Dorsolateral prefrontal cortex (tissue), 120 donors: ENCODE measurements at regions of chr7 and their contacts with region 1.

Region 1: GRCh38 chr7:101542527-101543241 is 86.4 kb downstream of the MYL10 start:
- DNase-seq: peak in 9 of 10 donors; percentile 55 to 81 (median 70)
- H3K4me3 ChIP-seq: no peak overlapping the region
- H3K27ac ChIP-seq: no peak overlapping the region
- H3K27me3 ChIP-seq: no peaks in the 10 kb centered on the region
- CTCF ChIP-seq: peak; percentile 73 to 95 (median 87)

Region 2: DNA sequence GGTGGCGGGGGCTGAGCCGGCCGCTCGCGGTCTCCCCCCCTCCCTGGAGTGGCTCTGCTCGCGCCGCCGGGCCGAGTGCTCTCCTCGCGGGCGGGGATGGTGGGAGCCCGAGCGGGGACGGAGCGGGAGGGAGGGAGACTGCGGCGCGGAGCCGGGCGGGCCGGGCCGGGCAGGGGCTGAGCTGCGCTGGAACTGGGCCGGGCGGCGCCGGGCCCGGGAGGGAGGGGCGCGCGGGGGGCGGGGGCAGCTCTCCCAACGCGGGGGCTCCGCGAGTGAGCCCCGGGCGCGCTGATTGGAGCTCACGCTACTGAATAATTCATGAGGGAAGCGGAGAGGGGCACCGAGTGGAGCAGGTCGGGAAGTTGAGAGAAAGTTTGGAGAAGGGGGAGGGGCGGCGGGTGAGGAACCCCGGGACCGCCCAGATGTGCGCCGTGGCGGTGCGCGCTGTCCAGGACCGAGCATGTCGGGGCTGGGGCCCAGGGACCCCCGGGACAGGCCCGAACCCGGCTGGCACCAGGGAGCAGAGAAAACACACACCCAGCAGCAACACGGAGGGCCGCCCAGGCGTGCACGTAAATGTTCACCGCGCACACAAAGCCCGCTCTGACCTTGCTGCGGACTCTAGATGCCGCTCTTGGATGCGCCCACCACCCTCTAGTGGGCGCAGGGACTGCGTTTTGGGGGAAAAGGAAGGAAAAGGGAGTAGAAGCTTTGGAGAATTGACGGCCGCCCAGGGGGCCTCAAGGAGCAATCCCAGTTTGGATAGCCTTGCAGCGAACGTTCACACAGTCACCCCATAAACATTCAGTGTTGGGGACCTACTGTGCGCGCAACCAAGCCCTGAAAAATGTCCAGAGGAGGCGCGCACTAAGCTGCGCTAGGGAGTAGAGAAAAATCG is 715.1 kb before region 1 on chr7 and contains the start of gene EPHB4:
- intact Hi-C with region 1: no loop called
- DNase-seq: no peak
- H3K4me3 ChIP-seq: peak within 1 kb of the TSS; percentile 22 to 71 (median 51)
- H3K27ac ChIP-seq: peak within 1 kb of the TSS in 6 of 59 donors; percentile 3 to 42 (median 12)
- H3K27me3 ChIP-seq: peaks cover 0 to 54% (median 20%) of the 10 kb centered on the region in 45 donors
- CTCF ChIP-seq: peak in 5 of 56 donors; percentile 6 to 10 (median 8)
- total RNA-seq, gene EPHB4: 2.4 to 17.5 (median 5.4) TPM

Region 3: GRCh38 chr7:101688183-101688831 is 145.6 kb after region 1 on chr7:
- intact Hi-C with region 1: loop called in 1 of 2 experiments (anchors 5 kb)
- DNase-seq: peak; percentile 58 to 82 (median 67)
- H3K4me3 ChIP-seq: peak overlapping the region in 42 of 59 donors; percentile 1 to 51 (median 34)
- H3K27ac ChIP-seq: no peak overlapping the region
- H3K27me3 ChIP-seq: peaks cover 0 to 3% (median 0%) of the 10 kb centered on the region in 45 donors
- CTCF ChIP-seq: peak; percentile 74 to 98 (median 96)